WTC11 (cell line): ENCODE measurements at regions of chr2 and their contacts with region 1.

Region 1: GRCh38 chr2:27683390-27684071 is 19.8 kb downstream of the SLC4A1AP start:
- DNase-seq: peak; percentile 84
- ATAC-seq: peak; percentile 95
- H3K4me3 Mint-ChIP-seq: no peak overlapping the region
- H3K27ac Mint-ChIP-seq: no peak overlapping the region; the same call in 1 of the 2 replicates
- H3K4me1 Mint-ChIP-seq: no peaks in the 10 kb centered on the region
- H3K27me3 Mint-ChIP-seq: no peaks in the 10 kb centered on the region
- CTCF ChIP-seq: peak; percentile 98

Region 2: GRCh38 chr2:27409321-27410073 is 274.0 kb before region 1 on chr2 and contains the start of gene PPM1G:
- CTCF ChIA-PET with region 1: interaction called, 14 read pairs
- POLR2A ChIA-PET with region 1: no interaction called
- DNase-seq: peak; percentile 98
- ATAC-seq: peak; percentile 92
- H3K4me3 Mint-ChIP-seq: peak within 1 kb of the TSS; percentile 84
- H3K27ac Mint-ChIP-seq: peak within 1 kb of the TSS; percentile 97
- H3K4me1 Mint-ChIP-seq: peaks cover 18% of the 10 kb centered on the region
- H3K27me3 Mint-ChIP-seq: peaks cover 13% of the 10 kb centered on the region
- CTCF ChIP-seq: no peak
- total RNA-seq, gene PPM1G: 140 to 193 TPM (median 147 TPM) in 3 replicates

Region 3: DNA sequence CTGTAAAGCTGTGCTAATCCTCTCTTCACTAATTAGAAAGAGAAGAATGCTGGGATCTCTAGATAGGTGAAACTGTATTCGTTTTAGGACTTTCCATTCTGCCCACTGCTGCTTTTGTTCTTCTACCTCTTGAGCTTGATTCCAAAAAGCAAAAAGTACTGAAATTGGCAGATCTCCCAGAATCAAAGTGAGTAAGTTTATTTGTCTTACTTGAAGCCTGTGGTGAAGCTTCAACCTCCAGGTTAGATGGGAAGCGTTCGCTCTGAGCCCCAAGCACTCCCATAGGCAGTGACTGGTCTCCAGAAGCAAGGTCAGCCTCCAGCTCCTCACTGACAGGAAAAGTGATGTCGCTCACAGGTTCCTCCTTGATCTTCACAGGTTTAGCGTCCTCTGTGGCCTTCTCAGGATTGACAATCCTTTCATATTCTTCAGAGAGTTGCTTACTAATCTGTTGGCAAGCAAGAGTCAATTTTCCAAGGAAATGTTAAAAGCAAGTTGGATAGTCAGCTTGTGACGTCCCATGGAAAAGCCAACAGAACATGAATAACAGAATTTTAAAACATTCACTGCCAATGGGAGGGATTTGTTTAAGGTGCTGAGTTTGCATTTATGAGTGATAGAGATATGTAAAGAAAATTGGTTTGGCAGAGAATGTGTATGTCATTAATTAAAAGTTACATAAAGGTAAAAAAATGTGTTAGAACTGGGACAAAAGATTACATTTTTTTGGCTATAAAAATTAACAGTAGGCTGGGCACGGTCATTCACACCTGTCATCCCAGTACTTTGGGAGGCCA is 28.2 kb before region 1 on chr2:
- CTCF ChIA-PET with region 1: interaction called, 11 read pairs
- POLR2A ChIA-PET with region 1: no interaction called
- DNase-seq: no peak
- ATAC-seq: peak; percentile 39
- H3K4me3 Mint-ChIP-seq: no peak overlapping the region
- H3K27ac Mint-ChIP-seq: 0 out of 2 replicates have a peak overlapping the region, but pooled peaks have one; percentile 24
- H3K4me1 Mint-ChIP-seq: no peaks in the 10 kb centered on the region; the same call in 1 of the 2 replicates
- H3K27me3 Mint-ChIP-seq: no peaks in the 10 kb centered on the region
- CTCF ChIP-seq: no peak

Region 4: DNA sequence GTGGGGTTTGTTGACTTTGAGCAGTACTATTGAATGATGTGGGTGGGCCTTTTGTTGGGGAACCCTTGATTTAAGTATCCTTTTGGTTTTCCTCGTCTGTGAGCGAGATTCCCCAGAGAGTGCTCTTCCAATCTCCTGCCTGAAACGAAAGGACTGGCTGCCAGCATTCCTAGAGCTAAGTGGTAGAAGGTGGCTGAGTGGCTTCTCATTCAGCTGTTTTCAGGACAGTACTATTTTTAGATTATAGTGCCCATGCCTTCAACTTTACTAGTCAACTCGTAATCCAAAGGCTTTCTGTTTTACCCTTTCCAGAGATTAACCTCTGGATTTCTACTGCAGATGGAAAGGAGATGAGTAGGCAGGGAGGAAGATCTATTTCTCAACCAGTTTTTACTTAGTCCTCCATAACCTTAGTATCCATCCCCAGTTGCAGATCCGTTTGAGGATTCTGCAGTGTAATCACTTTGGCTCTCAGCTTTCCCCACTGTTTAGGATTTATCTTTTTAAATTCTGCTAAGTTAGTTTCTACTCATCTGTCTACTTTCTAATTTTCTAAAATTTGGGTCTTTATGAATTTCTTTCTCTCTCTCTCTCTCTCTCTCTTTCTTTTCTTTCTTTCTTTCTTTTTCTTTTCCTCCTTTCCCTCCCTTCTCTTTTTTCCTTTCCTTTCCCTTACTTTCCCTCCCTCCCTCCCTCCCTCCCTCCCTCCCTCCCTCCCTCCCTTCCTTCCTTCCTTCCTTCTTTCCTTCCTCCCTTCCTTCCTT is 10.6 kb before region 1 on chr2:
- CTCF ChIA-PET with region 1: interaction called, 27 read pairs
- POLR2A ChIA-PET with region 1: no interaction called
- DNase-seq: no peak
- ATAC-seq: no peak
- H3K4me3 Mint-ChIP-seq: no peak overlapping the region
- H3K27ac Mint-ChIP-seq: no peak overlapping the region
- H3K4me1 Mint-ChIP-seq: no peaks in the 10 kb centered on the region
- H3K27me3 Mint-ChIP-seq: no peaks in the 10 kb centered on the region
- CTCF ChIP-seq: no peak

Region 5: GRCh38 chr2:27715318-27716210 is 32.0 kb after region 1 on chr2:
- CTCF ChIA-PET with region 1: interaction called, 13 read pairs
- POLR2A ChIA-PET with region 1: no interaction called
- DNase-seq: peak; percentile 35
- ATAC-seq: peak; percentile 20
- H3K4me3 Mint-ChIP-seq: peak overlapping the region; percentile 81
- H3K27ac Mint-ChIP-seq: no peak overlapping the region
- H3K4me1 Mint-ChIP-seq: peaks cover 18% of the 10 kb centered on the region
- H3K27me3 Mint-ChIP-seq: peaks cover 17% of the 10 kb centered on the region
- CTCF ChIP-seq: no peak

Region 6: DNA sequence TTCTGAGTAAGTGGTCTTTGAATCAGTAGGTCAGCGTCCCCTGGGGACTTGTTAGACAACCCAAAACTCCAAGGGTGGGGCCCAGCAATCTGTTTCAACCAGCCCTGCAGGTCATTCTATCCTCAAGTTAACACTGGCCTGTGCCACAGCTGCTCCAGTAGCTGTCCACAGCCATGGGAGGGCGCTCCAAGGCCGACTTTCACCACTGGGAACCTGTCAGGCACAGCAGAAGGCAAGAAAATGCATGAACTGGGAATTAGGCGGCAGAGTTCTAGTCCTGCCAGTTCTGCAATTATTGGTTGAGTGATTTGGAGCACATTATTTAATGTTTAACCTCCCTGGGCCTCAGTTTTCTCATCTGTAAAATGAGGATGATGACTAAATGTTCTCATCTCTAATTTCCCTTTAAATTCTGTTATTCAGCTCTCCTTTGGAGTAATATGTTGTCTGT is 70.6 kb after region 1 on chr2:
- CTCF ChIA-PET with region 1: interaction called, 13 read pairs
- POLR2A ChIA-PET with region 1: no interaction called
- DNase-seq: peak; percentile 93
- ATAC-seq: peak; percentile 87
- H3K4me3 Mint-ChIP-seq: peak overlapping the region; percentile 75; the same call in 1 of the 2 replicates
- H3K27ac Mint-ChIP-seq: no peak overlapping the region
- H3K4me1 Mint-ChIP-seq: peaks cover 25% of the 10 kb centered on the region
- H3K27me3 Mint-ChIP-seq: no peaks in the 10 kb centered on the region
- CTCF ChIP-seq: peak; percentile 85

Region 7: GRCh38 chr2:27844821-27845255 is 161.3 kb after region 1 on chr2:
- CTCF ChIA-PET with region 1: no interaction called
- POLR2A ChIA-PET with region 1: no interaction called
- DNase-seq: no peak
- ATAC-seq: no peak
- H3K4me3 Mint-ChIP-seq: no peak overlapping the region
- H3K27ac Mint-ChIP-seq: no peak overlapping the region; the same call in 1 of the 2 replicates
- H3K4me1 Mint-ChIP-seq: no peaks in the 10 kb centered on the region
- H3K27me3 Mint-ChIP-seq: no peaks in the 10 kb centered on the region; the same call in 1 of the 2 replicates
- CTCF ChIP-seq: no peak